ENCODE measurements at regions of chr3 and their contacts with region 1.

Region 1: DNA sequence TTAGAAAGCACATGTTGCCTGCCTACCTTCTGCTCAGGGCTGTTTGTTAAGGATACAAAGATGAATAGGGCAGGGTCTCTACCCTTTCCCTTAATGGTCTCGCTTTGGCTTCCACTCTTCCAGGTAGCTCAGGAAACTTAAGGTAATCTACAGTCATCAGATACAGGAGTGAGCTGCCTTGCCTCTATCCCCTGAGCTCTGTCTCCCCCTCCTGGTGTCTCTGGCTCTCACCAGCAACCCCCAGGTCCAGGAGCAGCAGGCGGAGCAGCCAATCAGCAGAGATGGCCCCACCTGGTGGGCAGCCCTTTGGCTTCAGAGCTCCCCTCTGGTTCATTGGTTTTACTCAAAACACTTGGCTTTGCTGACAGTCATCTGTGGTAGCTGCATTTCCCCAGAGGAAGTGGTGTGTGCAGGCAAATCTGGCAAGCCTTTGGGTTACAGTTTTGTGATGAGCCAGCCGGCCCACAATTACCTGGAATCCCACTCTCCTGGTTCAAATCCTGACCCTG is 8.5 kb upstream of the CX3CR1 start:
- DNase-seq: peak; percentile 79
- H3K4me3 ChIP-seq: no peak overlapping the region
- H3K27ac ChIP-seq: no peak overlapping the region
- H3K4me1 ChIP-seq: peaks cover 5% of the 10 kb centered on the region
- H3K27me3 ChIP-seq: peaks cover 0 to 1% of the 10 kb centered on the region in 2 experiments
- CTCF ChIP-seq: peak; percentile 93 to 95
- POLR2A ChIP-seq: no peak

Region 2: GRCh38 chr3:39079530-39079929 is 208.8 kb before region 1 on chr3:
- CTCF ChIA-PET with region 1: interaction called, 22 read pairs
- POLR2A ChIA-PET with region 1: no interaction called
- dilution Hi-C with region 1: no loop called
- intact Hi-C with region 1: no loop called
- DNase-seq: no peak
- H3K4me3 ChIP-seq: no peak overlapping the region
- H3K27ac ChIP-seq: no peak overlapping the region
- H3K4me1 ChIP-seq: peaks cover 6% of the 10 kb centered on the region
- H3K27me3 ChIP-seq: no peaks in the 10 kb centered on the region
- CTCF ChIP-seq: no peak
- POLR2A ChIP-seq: no peak

Region 3: GRCh38 chr3:39107388-39108199 is 180.8 kb before region 1 on chr3 and contains the starts of genes GORASP1 and TTC21A:
- CTCF ChIA-PET with region 1: interaction called, 26 read pairs
- POLR2A ChIA-PET with region 1: no interaction called
- dilution Hi-C with region 1: no loop called
- intact Hi-C with region 1: loop called (anchors 1 kb)
- DNase-seq: peak; percentile 86
- H3K4me3 ChIP-seq: peak within 1 kb of the TSS; percentile 69 to 84 (median 78)
- H3K27ac ChIP-seq: peak within 1 kb of the TSS; percentile 75
- H3K4me1 ChIP-seq: peaks cover 18% of the 10 kb centered on the region
- H3K27me3 ChIP-seq: no peaks in the 10 kb centered on the region
- CTCF ChIP-seq: no peak
- POLR2A ChIP-seq: peak; percentile 67
- total RNA-seq, gene GORASP1: 68.0 and 74.7 TPM in 2 replicates
- total RNA-seq, gene TTC21A: 6.3 and 7.8 TPM in 2 replicates

Region 4: DNA sequence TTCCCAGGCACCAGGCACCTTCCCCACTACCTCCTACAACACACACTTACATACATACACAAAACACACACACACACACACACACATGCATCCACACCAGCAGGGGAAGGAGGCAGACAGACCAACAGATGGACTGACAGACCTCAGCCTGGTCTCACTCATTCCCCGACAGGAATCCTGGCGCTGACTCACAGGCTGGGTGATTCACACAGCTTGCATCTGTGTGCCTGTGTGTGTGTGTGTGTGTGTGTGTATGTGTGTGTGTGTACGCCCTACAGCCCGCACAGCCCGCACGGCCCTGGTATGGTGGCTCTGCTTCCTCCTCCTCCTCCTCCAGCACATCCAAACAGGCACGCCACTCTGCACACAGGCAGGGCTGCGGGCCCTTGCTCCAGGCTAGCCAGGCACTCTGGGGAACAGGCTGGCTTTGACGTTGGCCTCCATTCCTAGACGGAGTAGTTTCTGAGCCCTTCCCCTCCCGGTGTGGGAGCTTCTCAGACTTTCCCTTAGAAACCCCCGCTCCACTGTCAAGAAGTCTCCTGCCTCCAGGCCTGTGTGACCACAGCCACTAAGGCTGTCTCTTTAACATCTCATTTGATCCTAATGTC is 141.3 kb before region 1 on chr3:
- CTCF ChIA-PET with region 1: interaction called, 20 read pairs
- POLR2A ChIA-PET with region 1: no interaction called
- dilution Hi-C with region 1: no loop called
- intact Hi-C with region 1: no loop called
- DNase-seq: peak; percentile 95
- H3K4me3 ChIP-seq: peak overlapping the region in 1 of 3 experiments; percentile 33
- H3K27ac ChIP-seq: peak overlapping the region; percentile 97
- H3K4me1 ChIP-seq: peaks cover 65% of the 10 kb centered on the region
- H3K27me3 ChIP-seq: no peaks in the 10 kb centered on the region
- CTCF ChIP-seq: no peak
- POLR2A ChIP-seq: peak; percentile 40

Region 5: DNA sequence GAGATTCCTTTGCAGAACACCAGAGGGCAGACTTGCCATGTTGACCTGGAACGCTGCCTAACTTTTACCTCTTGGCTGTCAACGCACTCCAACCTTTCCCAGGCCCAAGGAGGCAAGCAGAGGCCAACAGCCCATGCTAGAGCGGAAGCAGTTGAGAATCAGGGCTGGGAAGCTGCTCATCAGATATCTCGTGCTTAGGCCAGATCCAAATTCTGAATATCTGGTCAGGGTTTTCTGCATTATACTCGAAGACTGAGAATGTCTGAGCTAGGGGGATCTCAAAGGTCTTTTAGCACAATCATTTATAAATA is 98.4 kb before region 1 on chr3:
- CTCF ChIA-PET with region 1: interaction called, 183 read pairs
- POLR2A ChIA-PET with region 1: no interaction called
- dilution Hi-C with region 1: no loop called
- intact Hi-C with region 1: loop called (anchors 1 kb)
- DNase-seq: peak; percentile 67
- H3K4me3 ChIP-seq: no peak overlapping the region
- H3K27ac ChIP-seq: no peak overlapping the region
- H3K4me1 ChIP-seq: no peaks in the 10 kb centered on the region
- H3K27me3 ChIP-seq: no peaks in the 10 kb centered on the region
- CTCF ChIP-seq: peak; percentile 74 to 78
- POLR2A ChIP-seq: no peak

Region 6: GRCh38 chr3:39313289-39313688 is 24.9 kb after region 1 on chr3:
- CTCF ChIA-PET with region 1: interaction called, 10 read pairs
- POLR2A ChIA-PET with region 1: no interaction called
- dilution Hi-C with region 1: no loop called
- intact Hi-C with region 1: no loop called
- DNase-seq: no peak
- H3K4me3 ChIP-seq: no peak overlapping the region
- H3K27ac ChIP-seq: no peak overlapping the region
- H3K4me1 ChIP-seq: no peaks in the 10 kb centered on the region
- H3K27me3 ChIP-seq: no peaks in the 10 kb centered on the region
- CTCF ChIP-seq: no peak
- POLR2A ChIP-seq: no peak

Measured in endothelial cell of umbilical vein (primary cell).